ENCODE measurements at regions of chr1 and their contacts with region 1.

Region 1: GRCh38 chr1:237041795-237042525 is at the start of gene RYR2:
- DNase-seq: peak; percentile 36 to 70 (median 59)
- H3K4me3 ChIP-seq: peak within 1 kb of the TSS; percentile 48
- H3K27ac ChIP-seq: no peak within 1 kb of the TSS
- H3K4me1 ChIP-seq: no peaks in the 10 kb centered on the region
- H3K27me3 ChIP-seq: no peaks in the 10 kb centered on the region
- CTCF ChIP-seq: peak; percentile 44 to 55 (median 46)
- EP300 ChIP-seq: no peak
- POLR2A ChIP-seq: no peak
- total RNA-seq, gene RYR2: 3.0 to 13.8 (median 5.7) TPM

Region 2: GRCh38 chr1:235783148-235783776 is 1258.7 kb before region 1 on chr1:
- intact Hi-C with region 1: loop called in 1 of 4 experiments (anchors 10 kb)
- DNase-seq: peak in 1 of 5 donors; percentile 36
- H3K4me3 ChIP-seq: no peak overlapping the region
- H3K27ac ChIP-seq: no peak overlapping the region
- H3K4me1 ChIP-seq: no peaks in the 10 kb centered on the region
- H3K27me3 ChIP-seq: no peaks in the 10 kb centered on the region
- CTCF ChIP-seq: peak in 2 of 3 donors; percentile 27 to 35
- EP300 ChIP-seq: no peak
- POLR2A ChIP-seq: no peak

Region 3: GRCh38 chr1:237386362-237387143 is 344.6 kb after region 1 on chr1:
- intact Hi-C with region 1: loop called in 2 of 4 experiments (anchors 5 to 10 kb)
- DNase-seq: no peak
- H3K4me3 ChIP-seq: no peak overlapping the region
- H3K27ac ChIP-seq: no peak overlapping the region
- H3K4me1 ChIP-seq: peaks cover 4% of the 10 kb centered on the region
- H3K27me3 ChIP-seq: no peaks in the 10 kb centered on the region
- CTCF ChIP-seq: peak; percentile 21 to 61 (median 30)
- EP300 ChIP-seq: no peak
- POLR2A ChIP-seq: no peak

Region 4: DNA sequence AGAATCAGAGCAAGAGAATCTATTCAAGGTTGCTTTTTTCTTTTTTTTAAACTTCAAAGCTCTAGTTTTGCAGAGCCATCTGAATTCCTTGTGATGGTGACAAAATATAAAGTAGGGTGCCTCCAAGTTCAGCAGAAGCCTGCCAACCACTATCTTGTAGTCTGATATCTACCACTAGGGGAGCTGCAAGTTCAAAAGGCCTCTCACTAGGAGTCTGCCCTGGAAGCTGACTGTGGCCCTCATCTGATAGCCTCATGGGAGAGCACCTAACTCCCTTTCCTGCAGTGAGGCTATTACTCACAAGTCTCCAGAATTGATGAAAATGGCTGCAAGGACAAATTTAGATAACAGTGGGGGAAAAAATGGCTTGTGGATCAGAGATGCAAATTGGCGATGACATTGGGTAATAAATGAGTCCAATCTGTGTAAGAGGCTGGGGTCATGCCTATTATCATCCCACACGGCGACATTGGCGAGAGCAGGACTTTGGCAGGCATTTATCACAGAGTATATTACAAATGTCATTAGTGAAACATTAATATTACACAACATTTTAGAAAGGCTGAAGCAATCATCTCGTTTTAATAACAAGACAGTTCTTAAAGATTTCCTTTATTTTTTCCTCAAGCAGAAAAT is 859.5 kb after region 1 on chr1:
- intact Hi-C with region 1: no loop called
- DNase-seq: no peak
- H3K4me3 ChIP-seq: no peak overlapping the region
- H3K27ac ChIP-seq: no peak overlapping the region
- H3K4me1 ChIP-seq: no peaks in the 10 kb centered on the region
- H3K27me3 ChIP-seq: no peaks in the 10 kb centered on the region
- CTCF ChIP-seq: no peak
- EP300 ChIP-seq: no peak
- POLR2A ChIP-seq: no peak

Measured in ovary (tissue), 10 donors.